Left cardiac atrium (tissue), 4 donors: ENCODE measurements at regions of chr11 and their contacts with region 1.

Region 1: GRCh38 chr11:81644239-81644840 is 1089.3 kb downstream of the FAM181B start:
- DNase-seq: no peak
- ATAC-seq: no peak

Region 2: DNA sequence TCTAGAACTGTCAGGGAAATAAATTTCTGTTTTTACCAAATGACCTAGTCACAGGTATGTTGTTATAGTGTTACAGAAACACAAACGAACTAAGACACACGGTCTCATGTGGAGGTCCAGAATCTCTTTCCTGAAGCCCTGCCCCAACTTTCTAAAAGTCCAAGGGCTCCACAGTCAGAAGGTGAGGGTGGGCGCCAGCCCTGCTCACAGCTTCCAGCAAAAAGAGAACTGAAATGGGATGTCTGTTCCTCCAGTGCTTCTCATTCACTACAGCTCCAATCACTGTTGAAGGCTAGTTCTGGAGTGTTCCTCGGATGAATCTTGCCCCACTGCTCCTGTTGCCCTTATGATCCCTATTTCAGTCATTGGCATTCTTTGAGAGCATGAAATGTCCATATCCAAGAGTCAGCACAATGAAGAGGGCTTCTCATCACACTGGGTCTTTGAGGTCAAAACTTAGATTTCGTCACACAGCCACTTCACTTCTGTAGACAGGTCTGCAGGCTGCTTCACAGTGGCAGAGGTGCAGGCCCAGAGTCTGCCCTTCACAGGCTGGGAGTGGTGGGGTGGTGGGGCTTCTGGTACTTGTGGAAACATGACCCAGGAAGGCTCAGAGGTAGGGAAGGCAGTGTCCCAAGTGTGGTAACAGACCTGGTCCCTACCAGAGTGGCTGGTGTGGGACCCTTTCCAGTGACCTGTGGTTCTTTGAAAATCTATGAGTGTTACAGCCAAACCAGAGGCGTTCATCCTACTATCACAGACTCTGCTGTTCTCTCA is 1054.4 kb after region 1 on chr11:
- intact Hi-C with region 1: loop called (anchors 10 kb)
- DNase-seq: no peak
- ATAC-seq: no peak